Transverse colon (tissue), 4 donors: ENCODE measurements at regions of chr2 and their contacts with region 1.

Region 1: GRCh38 chr2:230496891-230497290 is 80.9 kb downstream of the SP100 start:
- DNase-seq: no peak
- H3K4me3 ChIP-seq: no peak overlapping the region
- H3K27ac ChIP-seq: no peak overlapping the region
- H3K4me1 ChIP-seq: peaks cover 0 to 4% (median 0%) of the 10 kb centered on the region in 4 donors
- H3K27me3 ChIP-seq: no peaks in the 10 kb centered on the region
- CTCF ChIP-seq: no peak
- EP300 ChIP-seq: no peak
- POLR2A ChIP-seq: no peak

Region 2: GRCh38 chr2:230885463-230886130 is 388.7 kb after region 1 on chr2:
- in situ Hi-C with region 1: no loop called
- intact Hi-C with region 1: loop called (anchors 5 kb)
- DNase-seq: no peak
- H3K4me3 ChIP-seq: no peak overlapping the region
- H3K27ac ChIP-seq: no peak overlapping the region
- H3K4me1 ChIP-seq: peaks cover 0 to 6% (median under 1%) of the 10 kb centered on the region in 4 donors
- H3K27me3 ChIP-seq: no peaks in the 10 kb centered on the region
- CTCF ChIP-seq: no peak
- EP300 ChIP-seq: no peak
- POLR2A ChIP-seq: no peak